Activated CD8-positive, alpha-beta T cell treated with anti-CD3 and anti-CD28 coated beads, Interleukin-2, amount 10 ng/mL, durations not matched to agents 7 days and 5 days (primary cell): ENCODE measurements at regions of chr14 and their contacts with region 1.

Region 1: DNA sequence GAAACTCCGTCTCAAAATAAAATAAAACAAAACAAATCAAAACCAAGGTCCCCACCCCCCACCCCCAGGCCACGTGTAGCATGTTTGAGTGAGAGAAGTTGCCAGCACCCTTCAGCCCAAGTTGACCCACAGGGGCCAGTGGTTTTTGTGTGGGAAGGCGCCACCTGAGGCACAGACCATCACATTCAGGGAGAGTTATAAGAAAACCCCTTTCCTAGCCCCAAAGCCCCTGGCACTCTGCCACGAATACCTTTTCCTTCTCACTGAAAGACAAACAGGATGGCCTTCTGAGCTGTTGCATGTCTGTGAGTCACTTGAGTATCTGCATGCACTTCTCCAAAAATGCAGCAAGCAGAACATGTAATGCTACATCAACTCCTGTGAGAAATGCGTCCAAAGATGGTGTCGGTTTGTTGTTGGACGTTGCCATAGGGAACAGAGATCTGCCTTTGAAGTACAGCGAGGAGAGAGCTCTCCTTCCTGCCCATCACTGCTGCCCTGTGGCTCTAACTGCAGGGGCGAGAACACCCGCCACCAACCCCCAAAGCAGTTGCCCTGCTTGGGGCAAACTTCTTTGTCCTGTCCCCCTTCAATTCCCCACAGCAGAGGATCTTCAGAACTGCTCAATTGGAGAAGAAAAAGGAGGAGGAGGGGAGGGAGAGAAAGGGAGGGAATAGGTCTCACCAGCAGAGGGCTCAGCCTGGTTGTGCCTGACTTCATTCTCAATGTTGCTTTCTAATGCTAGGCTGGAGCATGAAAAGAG is 2.7 kb upstream of the TRAF3 start:
- DNase-seq: peak; percentile 73
- ATAC-seq: peak; percentile 45
- H3K4me3 Mint-ChIP-seq: no peak overlapping the region
- H3K27ac Mint-ChIP-seq: peak overlapping the region; percentile 71
- H3K4me1 Mint-ChIP-seq: peaks cover 36% of the 10 kb centered on the region
- H3K27me3 Mint-ChIP-seq: no peaks in the 10 kb centered on the region

Region 2: GRCh38 chr14:102819176-102819628 is 44.6 kb after region 1 on chr14:
- CTCF ChIA-PET with region 1: interaction called, 11 read pairs
- POLR2A ChIA-PET with region 1: no interaction called
- DNase-seq: peak; percentile 59
- ATAC-seq: peak; percentile 80
- H3K4me3 Mint-ChIP-seq: peak overlapping the region; percentile 53
- H3K27ac Mint-ChIP-seq: peak overlapping the region; percentile 78
- H3K4me1 Mint-ChIP-seq: peaks cover 44% of the 10 kb centered on the region
- H3K27me3 Mint-ChIP-seq: no peaks in the 10 kb centered on the region

Region 3: DNA sequence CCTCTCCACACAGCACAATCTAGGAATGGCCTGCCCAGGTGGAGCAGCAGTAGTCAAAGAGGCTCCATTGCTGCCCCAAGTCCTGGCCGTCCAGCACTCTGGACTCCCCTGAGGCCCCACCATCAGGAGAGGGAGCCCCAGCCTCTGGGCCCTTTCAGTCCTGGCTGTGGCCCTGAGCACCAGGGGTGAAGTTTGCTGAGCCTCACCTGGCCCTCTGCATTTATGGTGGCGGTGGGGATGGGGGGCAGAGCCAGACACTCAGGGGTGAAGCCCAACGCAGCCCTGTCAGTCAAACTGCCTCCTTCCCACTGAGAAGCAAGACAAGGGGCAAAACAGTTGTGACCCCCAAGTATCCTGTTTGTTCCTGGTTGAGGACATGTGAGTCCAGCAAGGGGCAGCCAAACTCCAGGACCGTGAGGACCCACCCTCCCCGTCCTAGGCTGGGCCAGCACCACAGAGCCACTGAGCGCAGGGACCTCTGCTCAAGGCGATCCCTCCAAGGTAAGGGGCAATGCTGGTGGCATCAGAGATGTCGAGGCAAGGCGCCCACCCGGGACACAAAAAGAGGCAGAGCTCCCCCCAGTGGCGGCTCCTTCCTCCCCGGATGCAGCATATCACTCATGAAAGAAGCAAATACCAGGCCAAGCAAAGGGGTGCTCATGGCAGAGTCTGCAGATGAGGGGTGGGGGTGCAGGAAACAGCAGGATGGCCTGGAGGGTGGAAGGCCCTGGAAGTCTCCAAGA is 143.1 kb after region 1 on chr14:
- CTCF ChIA-PET with region 1: interaction called, 11 read pairs
- POLR2A ChIA-PET with region 1: no interaction called
- DNase-seq: peak; percentile 77
- ATAC-seq: peak; percentile 50
- H3K4me3 Mint-ChIP-seq: no peak overlapping the region
- H3K27ac Mint-ChIP-seq: peak overlapping the region; percentile 56
- H3K4me1 Mint-ChIP-seq: peaks cover 9% of the 10 kb centered on the region
- H3K27me3 Mint-ChIP-seq: no peaks in the 10 kb centered on the region